Naive thymus-derived CD4-positive, alpha-beta T cell (primary cell): ENCODE measurements at regions of chr1 and their contacts with region 1.

Region 1: DNA sequence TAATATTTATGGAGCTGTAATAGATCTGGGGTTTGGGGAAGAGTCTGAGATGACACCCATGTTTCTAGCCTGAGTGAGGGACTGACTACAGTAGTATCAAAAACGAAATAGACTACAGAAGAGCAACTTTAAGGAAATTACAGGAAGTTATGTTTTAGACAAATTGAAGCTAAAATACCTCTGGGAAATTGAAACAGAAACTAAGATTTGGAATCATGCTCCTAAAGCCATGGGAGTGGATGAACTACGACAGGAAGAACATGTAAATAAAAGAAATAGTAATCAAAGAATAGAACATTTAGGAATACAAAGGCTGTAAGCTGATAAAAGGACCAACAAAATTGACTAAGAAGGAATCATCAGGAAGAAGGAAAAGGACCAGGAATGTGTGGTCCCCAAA is 68.9 kb downstream of the KIAA0319L start:
- DNase-seq: no peak
- ATAC-seq: no peak
- H3K4me3 ChIP-seq: no peak overlapping the region
- H3K4me3 Mint-ChIP-seq: peak overlapping the region in 8 of 10 donors; percentile 4 to 56 (median 43)
- H3K27ac ChIP-seq: no peak overlapping the region
- H3K27ac Mint-ChIP-seq: peak overlapping the region in 6 of 9 donors; percentile 0 to 74 (median 52)
- H3K4me1 ChIP-seq: peaks cover 0 to 11% of the 10 kb centered on the region in 2 donors
- H3K4me1 Mint-ChIP-seq: peaks cover 13 to 23% (median 15%) of the 10 kb centered on the region in 7 donors
- H3K27me3 ChIP-seq: no peaks in the 10 kb centered on the region
- H3K27me3 Mint-ChIP-seq: no peaks in the 10 kb centered on the region

Region 2: GRCh38 chr1:35220976-35221375 is 267.4 kb before region 1 on chr1:
- CTCF ChIA-PET with region 1: no interaction called
- POLR2A ChIA-PET with region 1: no interaction called
- intact Hi-C with region 1: no loop called
- DNase-seq: peak in 6 of 9 donors; percentile 7 to 24 (median 14)
- ATAC-seq: peak; percentile 57
- H3K4me3 ChIP-seq: no peak overlapping the region
- H3K4me3 Mint-ChIP-seq: no peak overlapping the region
- H3K27ac ChIP-seq: no peak overlapping the region
- H3K27ac Mint-ChIP-seq: no peak overlapping the region
- H3K4me1 ChIP-seq: no peaks in the 10 kb centered on the region
- H3K4me1 Mint-ChIP-seq: peaks cover 0 to 5% (median 0%) of the 10 kb centered on the region in 7 donors
- H3K27me3 ChIP-seq: no peaks in the 10 kb centered on the region
- H3K27me3 Mint-ChIP-seq: peaks cover 0 to 3% (median 0%) of the 10 kb centered on the region in 5 donors

Region 3: DNA sequence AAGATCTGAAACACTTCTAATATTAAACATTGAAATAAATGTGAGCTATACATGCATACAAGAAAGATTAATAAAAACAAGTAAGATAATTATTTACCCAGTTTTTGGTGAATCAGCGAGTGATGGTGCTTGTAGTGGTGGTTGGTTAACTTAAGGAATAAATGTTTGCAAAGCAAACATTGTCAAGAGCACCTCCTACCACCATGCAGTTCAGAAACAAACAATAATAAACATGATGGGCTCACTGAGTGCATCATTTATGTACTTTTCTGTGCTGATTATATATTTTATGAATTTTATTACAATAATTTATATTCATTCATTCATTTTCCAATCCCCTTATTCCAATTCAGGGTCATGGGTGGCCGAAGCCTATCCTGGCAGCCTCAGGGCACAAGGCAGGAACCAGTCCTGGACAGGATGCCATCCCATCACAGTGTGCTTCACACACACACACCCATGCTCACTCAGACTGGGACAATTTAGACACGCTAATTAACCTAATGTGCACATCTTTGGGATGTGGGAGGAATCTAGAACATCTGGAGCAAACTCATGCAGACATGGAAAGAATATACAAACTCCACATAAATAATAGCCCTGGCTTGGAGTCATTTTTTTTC is 162.0 kb before region 1 on chr1:
- CTCF ChIA-PET with region 1: no interaction called
- POLR2A ChIA-PET with region 1: interaction called, 10 read pairs
- intact Hi-C with region 1: no loop called
- DNase-seq: no peak
- ATAC-seq: no peak
- H3K4me3 ChIP-seq: no peak overlapping the region
- H3K4me3 Mint-ChIP-seq: no peak overlapping the region
- H3K27ac ChIP-seq: no peak overlapping the region
- H3K27ac Mint-ChIP-seq: no peak overlapping the region
- H3K4me1 ChIP-seq: no peaks in the 10 kb centered on the region
- H3K4me1 Mint-ChIP-seq: peaks cover 0 to 30% (median 19%) of the 10 kb centered on the region in 7 donors
- H3K27me3 ChIP-seq: no peaks in the 10 kb centered on the region
- H3K27me3 Mint-ChIP-seq: no peaks in the 10 kb centered on the region

Region 4: GRCh38 chr1:35431173-35431599 is 57.1 kb before region 1 on chr1:
- CTCF ChIA-PET with region 1: no interaction called
- POLR2A ChIA-PET with region 1: no interaction called
- intact Hi-C with region 1: no loop called
- DNase-seq: no peak
- ATAC-seq: no peak
- H3K4me3 ChIP-seq: no peak overlapping the region
- H3K4me3 Mint-ChIP-seq: no peak overlapping the region
- H3K27ac ChIP-seq: no peak overlapping the region
- H3K27ac Mint-ChIP-seq: peak overlapping the region in 7 of 9 donors; percentile 6 to 68 (median 51)
- H3K4me1 ChIP-seq: no peaks in the 10 kb centered on the region
- H3K4me1 Mint-ChIP-seq: peaks cover 0 to 14% (median 9%) of the 10 kb centered on the region in 7 donors
- H3K27me3 ChIP-seq: no peaks in the 10 kb centered on the region
- H3K27me3 Mint-ChIP-seq: no peaks in the 10 kb centered on the region

Region 5: GRCh38 chr1:36397378-36398230 is 909.3 kb after region 1 on chr1 and contains the start of gene LSM10:
- CTCF ChIA-PET with region 1: no interaction called
- POLR2A ChIA-PET with region 1: no interaction called
- intact Hi-C with region 1: no loop called
- DNase-seq: peak; percentile 71 to 92 (median 83)
- ATAC-seq: peak; percentile 77
- H3K4me3 ChIP-seq: peak within 1 kb of the TSS; percentile 88
- H3K4me3 Mint-ChIP-seq: peak within 1 kb of the TSS; percentile 87 to 100 (median 97)
- H3K27ac ChIP-seq: peak within 1 kb of the TSS; percentile 89
- H3K27ac Mint-ChIP-seq: peak within 1 kb of the TSS; percentile 82 to 100 (median 99)
- H3K4me1 ChIP-seq: peaks cover 13 to 16% of the 10 kb centered on the region in 2 donors
- H3K4me1 Mint-ChIP-seq: peaks cover 19 to 48% (median 34%) of the 10 kb centered on the region in 7 donors
- H3K27me3 ChIP-seq: no peaks in the 10 kb centered on the region
- H3K27me3 Mint-ChIP-seq: no peaks in the 10 kb centered on the region
- total RNA-seq, gene LSM10: 21.9 to 49.7 (median 35.7) TPM